Right ventricle myocardium inferior (tissue), 1 donor: ENCODE measurements at regions of chr14 and their contacts with region 1.

Region 1: GRCh38 chr14:39015360-39015961 is 87.6 kb downstream of the SEC23A start:
- DNase-seq: no peak
- ATAC-seq: no peak

Region 2: DNA sequence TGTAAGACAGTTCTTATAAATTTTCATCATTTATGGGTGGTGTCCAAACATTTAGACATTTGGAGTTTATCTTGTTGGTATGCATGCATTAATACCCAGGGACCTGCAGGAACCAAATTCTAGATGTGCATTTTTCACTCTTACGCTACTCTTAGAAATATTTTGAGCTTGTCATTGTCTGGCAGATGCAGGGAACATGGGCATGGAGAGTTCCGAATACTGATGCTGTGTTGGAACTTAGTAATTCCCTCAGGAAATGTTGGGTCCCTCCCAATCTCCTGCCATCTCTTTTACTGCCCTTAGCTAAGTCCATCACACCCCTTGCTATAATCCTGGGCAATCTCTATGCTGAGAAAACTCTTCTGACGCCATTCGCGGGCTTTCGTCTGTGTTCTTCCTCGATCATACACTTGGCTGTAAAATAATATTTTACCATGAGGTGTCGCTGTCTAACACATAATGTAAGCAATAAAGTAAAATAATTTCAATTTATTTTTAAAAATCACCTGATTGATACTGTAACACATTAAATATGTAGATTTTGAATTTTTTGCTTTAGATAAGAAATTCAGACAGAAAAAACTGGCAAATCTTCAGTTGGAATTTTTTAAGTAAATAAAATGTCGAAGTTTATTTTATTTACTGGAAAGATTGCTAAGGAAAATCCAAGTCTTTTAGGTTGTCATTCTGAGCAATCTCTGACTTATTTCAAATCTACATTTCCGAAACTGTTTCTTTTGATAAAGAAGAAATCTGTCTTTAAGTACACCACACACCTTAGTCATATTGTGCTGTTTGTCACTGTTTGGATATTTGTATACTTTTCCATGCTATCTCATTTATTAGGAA is 1111.9 kb before region 1 on chr14:
- intact Hi-C with region 1: loop called (anchors 2 kb)
- DNase-seq: no peak
- ATAC-seq: peak; percentile 29

Region 3: GRCh38 chr14:38420048-38420447 is 595.4 kb before region 1 on chr14:
- intact Hi-C with region 1: no loop called
- DNase-seq: no peak
- ATAC-seq: no peak

Region 4: GRCh38 chr14:38721822-38722431 is 293.5 kb before region 1 on chr14:
- intact Hi-C with region 1: loop called (anchors 5 kb)
- DNase-seq: no peak
- ATAC-seq: peak; percentile 44

Region 5: GRCh38 chr14:38839743-38840365 is 175.6 kb before region 1 on chr14:
- intact Hi-C with region 1: no loop called
- DNase-seq: no peak
- ATAC-seq: no peak

Region 6: GRCh38 chr14:38877744-38878388 is 137.6 kb before region 1 on chr14:
- intact Hi-C with region 1: loop called (anchors 5 kb)
- DNase-seq: no peak
- ATAC-seq: no peak

Region 7: DNA sequence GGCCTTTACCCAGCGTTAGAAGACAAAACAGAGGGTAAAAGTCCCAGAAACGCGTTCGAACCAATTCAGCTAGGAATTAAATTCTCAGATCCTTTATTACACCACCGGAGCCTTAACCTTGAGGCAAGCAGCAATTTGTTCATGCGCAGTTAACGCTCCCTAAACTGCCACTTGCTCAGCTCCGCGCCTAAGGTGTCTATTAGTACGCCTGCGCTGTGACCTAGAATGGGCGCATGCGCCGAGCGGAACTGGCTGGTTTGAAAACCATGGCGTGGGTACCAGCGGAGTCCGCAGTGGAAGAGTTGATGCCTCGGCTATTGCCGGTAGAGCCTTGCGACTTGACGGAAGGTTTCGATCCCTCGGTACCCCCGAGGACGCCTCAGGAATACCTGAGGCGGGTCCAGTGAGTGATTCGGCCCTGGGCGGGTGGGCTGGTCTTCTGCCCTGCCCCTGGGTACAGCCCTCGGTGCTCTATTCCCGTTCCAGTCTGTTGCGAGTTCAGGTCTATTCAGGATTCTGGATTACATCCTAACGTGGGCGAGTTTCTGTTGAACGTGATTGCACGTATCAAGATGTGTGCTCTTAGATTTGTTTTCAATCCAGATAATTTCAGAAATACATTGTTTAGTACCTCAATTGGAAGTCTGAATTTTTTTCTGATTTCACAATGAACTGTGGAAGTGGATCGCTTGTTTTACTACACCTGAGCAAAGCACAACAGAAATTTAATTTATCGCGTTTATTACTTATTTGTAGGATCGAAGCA is 98.8 kb after region 1 on chr14 and contains the start of gene GEMIN2:
- intact Hi-C with region 1: no loop called
- DNase-seq: peak; percentile 98
- ATAC-seq: peak; percentile 100
- total RNA-seq, gene GEMIN2: 7.0 TPM

Region 8: DNA sequence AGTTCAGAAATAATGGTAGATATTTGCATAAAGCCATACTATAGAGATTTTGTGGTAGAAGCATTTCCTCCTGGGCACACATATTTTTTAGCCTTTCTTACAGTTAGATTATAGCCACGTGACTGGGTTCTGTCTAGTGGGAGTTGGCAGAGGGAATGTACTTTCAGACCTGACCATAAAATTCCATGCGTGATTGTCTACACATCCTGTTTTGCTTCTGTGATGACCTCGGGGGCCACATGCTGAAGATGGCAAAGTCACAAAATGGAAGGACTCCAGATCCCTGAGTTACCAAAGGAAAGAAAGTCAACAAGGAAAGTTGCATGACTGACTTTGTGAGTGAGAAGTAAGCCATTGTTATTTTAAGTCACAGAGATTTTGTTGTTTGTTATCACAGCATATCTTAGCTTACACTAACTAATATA is 203.6 kb after region 1 on chr14:
- intact Hi-C with region 1: no loop called
- DNase-seq: no peak
- ATAC-seq: no peak